ENCODE measurements at regions of chr6 and their contacts with region 1.

Region 1: GRCh38 chr6:117976030-117976651 is 69.1 kb downstream of the SLC35F1 start:
- DNase-seq: no peak
- H3K4me3 ChIP-seq: no peak overlapping the region
- H3K27ac ChIP-seq: no peak overlapping the region
- H3K4me1 ChIP-seq: no peaks in the 10 kb centered on the region
- H3K27me3 ChIP-seq: no peaks in the 10 kb centered on the region
- CTCF ChIP-seq: peak in 1 of 3 experiments; percentile 17
- POLR2A ChIP-seq: no peak

Region 2: DNA sequence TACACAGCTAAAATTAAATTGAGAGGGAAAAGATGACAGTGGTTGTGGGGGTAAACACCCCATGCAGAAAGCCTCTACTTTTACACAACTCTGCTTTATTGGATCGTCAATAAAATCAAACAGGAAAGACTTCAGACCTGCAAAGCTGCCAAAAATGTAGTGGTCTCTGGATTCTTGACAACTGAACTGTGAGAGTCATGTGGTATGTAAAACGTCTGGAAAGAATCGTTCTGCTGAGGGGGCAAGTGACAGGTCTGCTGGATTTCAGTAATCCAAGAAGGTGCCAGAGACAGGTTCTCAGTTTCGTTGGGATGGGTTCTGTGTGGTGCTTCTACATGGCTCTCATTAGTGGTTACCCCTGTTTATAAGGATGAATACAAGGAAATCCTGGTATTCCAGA is 1785.6 kb before region 1 on chr6:
- intact Hi-C with region 1: no loop called
- DNase-seq: no peak
- H3K4me3 ChIP-seq: no peak overlapping the region
- H3K27ac ChIP-seq: no peak overlapping the region
- H3K4me1 ChIP-seq: peaks cover 16% of the 10 kb centered on the region
- H3K27me3 ChIP-seq: no peaks in the 10 kb centered on the region
- CTCF ChIP-seq: no peak
- POLR2A ChIP-seq: no peak

Region 3: GRCh38 chr6:118263921-118264486 is 287.9 kb after region 1 on chr6:
- intact Hi-C with region 1: loop called (anchors 10 kb)
- DNase-seq: no peak
- H3K4me3 ChIP-seq: no peak overlapping the region
- H3K27ac ChIP-seq: no peak overlapping the region
- H3K4me1 ChIP-seq: no peaks in the 10 kb centered on the region
- H3K27me3 ChIP-seq: no peaks in the 10 kb centered on the region
- CTCF ChIP-seq: no peak
- POLR2A ChIP-seq: no peak